ENCODE measurements at regions of chrX and their contacts with region 1.

Region 1: DNA sequence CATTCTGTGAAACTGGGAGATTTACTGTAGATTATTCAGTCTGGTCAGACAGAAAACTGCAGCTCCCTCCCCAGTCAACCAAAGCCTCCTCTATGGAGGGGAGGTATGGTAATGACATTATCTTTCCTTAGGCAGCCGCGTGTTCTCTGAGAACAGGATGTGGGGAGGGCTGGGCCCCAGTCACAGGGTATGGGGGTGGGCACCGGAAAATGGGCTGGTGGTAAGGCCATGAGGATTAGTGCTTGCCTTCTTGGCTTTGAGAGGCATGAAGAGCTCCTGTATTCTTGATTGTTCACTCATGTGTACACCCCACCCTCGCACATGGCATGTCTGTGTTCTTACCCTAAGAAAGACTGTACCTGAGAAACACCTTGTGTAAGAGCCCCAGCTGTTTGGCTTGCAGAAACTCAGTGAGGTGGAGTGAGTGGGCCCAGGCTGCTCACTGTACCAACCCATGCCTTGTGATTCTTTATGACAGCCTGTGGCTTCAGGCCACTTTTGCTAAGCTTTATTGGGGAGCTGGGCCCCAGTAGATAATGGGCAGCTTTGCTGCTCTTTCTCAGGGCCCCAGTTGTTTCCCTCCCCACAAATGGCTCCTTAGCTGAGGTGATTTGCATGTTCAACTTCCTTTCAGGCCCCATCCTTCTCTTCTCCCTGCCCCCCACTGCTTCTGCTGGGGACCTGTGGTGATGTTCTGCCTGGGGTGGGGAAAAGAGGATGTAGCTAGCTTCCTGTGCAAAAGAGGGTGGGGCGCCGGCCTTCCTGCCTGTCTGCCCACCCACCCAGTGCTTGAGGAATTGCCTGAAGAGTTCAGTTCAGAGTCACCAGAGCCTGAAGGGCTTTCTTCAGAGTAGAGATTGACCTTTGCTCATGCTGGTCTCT is 30.7 kb downstream of the MSN start:
- DNase-seq: peak; percentile 28
- ATAC-seq: peak; percentile 55
- H3K4me3 Mint-ChIP-seq: peak overlapping the region; percentile 67
- H3K27ac Mint-ChIP-seq: peak overlapping the region; percentile 91
- H3K4me1 Mint-ChIP-seq: peaks cover 95% of the 10 kb centered on the region
- H3K27me3 Mint-ChIP-seq: no peaks in the 10 kb centered on the region
- CTCF ChIP-seq: no peak

Region 2: DNA sequence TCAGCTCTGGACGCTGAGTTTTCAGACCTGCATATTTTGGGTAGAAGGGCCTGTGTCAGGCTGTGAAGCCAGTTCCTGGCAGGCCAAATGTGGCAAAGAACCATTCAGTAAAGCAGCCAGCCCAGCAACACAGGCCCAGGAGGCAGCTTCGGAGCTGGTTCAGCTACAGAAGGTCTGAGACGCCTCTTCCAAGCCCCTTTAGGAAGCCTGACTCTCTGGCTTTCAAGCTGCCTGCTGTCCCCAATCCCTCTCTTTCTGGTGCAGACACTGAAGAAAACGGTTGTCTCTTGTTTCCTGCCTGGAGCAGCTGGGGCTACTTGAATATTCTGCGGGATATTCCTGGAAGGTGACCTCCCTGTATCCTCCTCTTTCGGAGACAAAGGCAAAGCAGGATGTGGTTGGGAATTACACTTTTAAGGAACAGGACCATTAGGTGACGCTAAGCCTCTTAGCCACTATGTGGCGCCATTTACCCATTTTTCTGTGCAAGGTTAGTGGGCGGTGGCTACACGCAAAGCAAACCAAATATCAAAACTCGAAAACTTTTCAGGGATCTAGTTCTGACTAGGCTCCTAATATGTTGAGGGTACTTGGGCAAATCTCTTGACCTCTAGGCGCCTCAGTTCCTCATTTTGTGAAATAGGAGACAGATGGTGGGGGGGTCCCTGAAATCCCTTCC is 116.4 kb before region 1 on chrX:
- CTCF ChIA-PET with region 1: no interaction called
- POLR2A ChIA-PET with region 1: no interaction called
- intact Hi-C with region 1: no loop called
- DNase-seq: no peak
- ATAC-seq: peak; percentile 67
- H3K4me3 Mint-ChIP-seq: no peak overlapping the region
- H3K27ac Mint-ChIP-seq: no peak overlapping the region
- H3K4me1 Mint-ChIP-seq: peaks cover 12% of the 10 kb centered on the region
- H3K27me3 Mint-ChIP-seq: no peaks in the 10 kb centered on the region
- CTCF ChIP-seq: no peak

Region 3: DNA sequence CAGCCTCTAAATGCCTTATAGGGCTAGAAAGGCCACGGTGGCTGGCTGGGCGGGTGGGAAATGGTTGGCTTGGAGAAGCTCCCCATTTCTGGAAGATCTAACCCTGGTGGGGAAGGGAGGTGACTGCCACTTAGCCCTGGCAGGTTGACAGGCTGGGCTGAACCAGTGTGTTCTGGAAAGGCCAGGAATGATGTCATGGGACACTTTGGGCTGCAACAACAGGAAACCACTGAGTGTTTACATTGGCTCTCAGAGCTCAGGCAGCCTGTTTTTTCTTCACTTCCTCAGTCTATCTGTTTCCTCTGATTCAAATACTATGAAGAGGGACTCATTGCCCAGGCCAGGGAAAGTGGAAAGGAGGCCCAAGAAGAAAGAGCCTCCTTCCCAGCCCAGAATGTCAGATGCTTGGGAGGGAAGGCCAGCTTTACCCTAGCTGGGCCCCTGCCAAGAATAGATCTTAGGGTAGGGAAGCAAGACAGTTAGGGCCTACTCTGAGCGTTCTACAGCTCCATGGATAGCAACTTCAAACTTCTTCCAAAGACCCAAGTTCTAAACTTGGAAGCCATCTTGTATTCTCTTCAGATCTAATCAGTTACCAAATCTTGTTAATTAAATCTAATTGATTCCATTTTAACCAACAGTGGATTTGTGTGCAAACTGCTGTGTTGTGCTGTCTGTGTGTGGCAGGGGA is 96.5 kb before region 1 on chrX:
- CTCF ChIA-PET with region 1: interaction called, 3 read pairs
- POLR2A ChIA-PET with region 1: interaction called, 10 read pairs
- intact Hi-C with region 1: no loop called
- DNase-seq: no peak
- ATAC-seq: peak; percentile 60
- H3K4me3 Mint-ChIP-seq: no peak overlapping the region
- H3K27ac Mint-ChIP-seq: peak overlapping the region; percentile 74
- H3K4me1 Mint-ChIP-seq: peaks cover 50% of the 10 kb centered on the region
- H3K27me3 Mint-ChIP-seq: no peaks in the 10 kb centered on the region
- CTCF ChIP-seq: no peak

Region 4: DNA sequence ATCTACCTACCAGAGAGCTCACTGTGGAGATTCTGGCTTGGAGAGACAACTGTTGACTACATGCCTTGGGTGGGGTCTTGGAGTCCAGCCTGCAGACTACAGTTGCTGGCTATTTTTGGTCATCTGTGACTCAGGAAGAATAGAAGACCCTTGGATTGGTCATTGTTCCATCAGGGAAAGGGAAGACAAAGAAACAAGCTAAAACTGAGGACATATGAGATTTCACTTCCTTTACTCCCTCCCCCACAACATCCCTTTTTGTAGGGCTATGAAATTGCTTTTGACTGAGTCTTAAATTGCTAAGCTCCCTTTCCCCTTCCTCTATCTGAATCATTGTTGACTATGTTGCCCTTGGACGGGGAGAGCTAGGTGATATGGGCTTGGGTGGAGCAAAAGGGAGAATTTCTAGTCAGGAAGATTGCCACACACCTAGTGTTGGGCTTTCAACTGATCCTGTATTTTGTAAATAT is 19.1 kb before region 1 on chrX:
- CTCF ChIA-PET with region 1: interaction called, 3 read pairs
- POLR2A ChIA-PET with region 1: interaction called, 5 read pairs
- intact Hi-C with region 1: loop called (anchors 2 kb)
- DNase-seq: no peak
- ATAC-seq: peak; percentile 42
- H3K4me3 Mint-ChIP-seq: peak overlapping the region; percentile 57
- H3K27ac Mint-ChIP-seq: peak overlapping the region; percentile 77
- H3K4me1 Mint-ChIP-seq: peaks cover 88% of the 10 kb centered on the region
- H3K27me3 Mint-ChIP-seq: no peaks in the 10 kb centered on the region
- CTCF ChIP-seq: no peak

Region 5: DNA sequence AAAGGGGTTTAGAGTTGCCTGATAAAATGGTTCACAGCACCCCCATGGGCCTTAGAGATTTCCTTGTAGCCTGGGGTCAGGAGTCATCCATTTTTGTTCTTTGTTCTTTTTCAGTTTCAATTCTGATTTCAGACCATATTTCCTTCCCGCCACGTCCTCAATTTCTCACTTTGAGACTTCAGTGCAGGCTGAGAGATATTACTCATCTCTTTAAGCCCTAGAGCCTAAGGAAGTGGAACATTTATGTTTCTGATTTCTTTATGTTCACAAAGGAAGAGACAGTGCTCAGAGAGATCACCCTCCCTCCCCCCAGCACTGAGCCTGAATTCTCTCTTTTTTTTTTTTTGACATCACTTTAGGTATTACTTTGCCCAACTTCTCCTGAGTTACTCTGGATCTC is 25.6 kb after region 1 on chrX:
- CTCF ChIA-PET with region 1: no interaction called
- POLR2A ChIA-PET with region 1: interaction called, 3 read pairs
- intact Hi-C with region 1: loop called (anchors 2 kb)
- DNase-seq: no peak
- ATAC-seq: peak; percentile 88
- H3K4me3 Mint-ChIP-seq: peak overlapping the region; percentile 32
- H3K27ac Mint-ChIP-seq: peak overlapping the region; percentile 76
- H3K4me1 Mint-ChIP-seq: peaks cover 87% of the 10 kb centered on the region
- H3K27me3 Mint-ChIP-seq: no peaks in the 10 kb centered on the region
- CTCF ChIP-seq: no peak

Region 6: DNA sequence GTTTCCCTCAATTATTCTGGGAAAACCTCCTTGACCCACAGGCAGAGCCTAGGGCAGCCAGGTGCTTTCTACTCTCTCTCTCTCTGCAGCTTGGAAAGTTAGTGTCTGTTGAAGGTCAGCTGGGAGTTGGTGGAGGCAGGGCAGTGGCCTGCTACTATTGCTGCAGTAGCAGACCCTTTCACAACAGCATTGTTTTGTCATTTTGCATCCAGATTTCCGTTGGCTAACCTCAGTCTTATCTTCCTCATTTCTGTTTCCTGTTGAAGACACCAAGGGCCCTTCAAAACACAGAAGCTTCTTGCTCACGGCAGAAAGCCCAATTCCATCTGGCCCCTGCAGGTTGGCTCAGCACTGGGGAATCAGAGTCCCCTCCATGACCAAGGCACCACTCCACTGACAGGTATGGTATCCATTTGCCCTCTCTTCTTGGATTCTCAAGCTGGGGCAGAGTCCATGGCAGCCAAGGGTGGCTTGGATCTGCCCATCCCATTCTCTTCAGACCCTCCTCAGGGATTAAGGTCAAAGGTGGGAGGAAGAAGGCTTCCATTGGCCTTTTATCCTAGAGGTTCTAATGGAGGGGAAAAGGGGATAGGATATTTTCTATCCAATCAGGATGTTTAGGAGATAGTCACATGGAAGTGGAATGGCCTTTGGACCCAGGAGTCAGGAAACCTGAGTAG is 317.1 kb after region 1 on chrX:
- CTCF ChIA-PET with region 1: no interaction called
- POLR2A ChIA-PET with region 1: interaction called, 4 read pairs
- intact Hi-C with region 1: loop called (anchors 5 kb)
- DNase-seq: peak; percentile 16
- ATAC-seq: peak; percentile 43
- H3K4me3 Mint-ChIP-seq: peak overlapping the region; percentile 73
- H3K27ac Mint-ChIP-seq: peak overlapping the region; percentile 93
- H3K4me1 Mint-ChIP-seq: peaks cover 95% of the 10 kb centered on the region
- H3K27me3 Mint-ChIP-seq: no peaks in the 10 kb centered on the region
- CTCF ChIP-seq: no peak

Measured in activated B cell treated with CpG ODN at 0.5 μM for 24 hours (primary cell).